ENCODE measurements at regions of chr2 and their contacts with region 1.

Region 1: DNA sequence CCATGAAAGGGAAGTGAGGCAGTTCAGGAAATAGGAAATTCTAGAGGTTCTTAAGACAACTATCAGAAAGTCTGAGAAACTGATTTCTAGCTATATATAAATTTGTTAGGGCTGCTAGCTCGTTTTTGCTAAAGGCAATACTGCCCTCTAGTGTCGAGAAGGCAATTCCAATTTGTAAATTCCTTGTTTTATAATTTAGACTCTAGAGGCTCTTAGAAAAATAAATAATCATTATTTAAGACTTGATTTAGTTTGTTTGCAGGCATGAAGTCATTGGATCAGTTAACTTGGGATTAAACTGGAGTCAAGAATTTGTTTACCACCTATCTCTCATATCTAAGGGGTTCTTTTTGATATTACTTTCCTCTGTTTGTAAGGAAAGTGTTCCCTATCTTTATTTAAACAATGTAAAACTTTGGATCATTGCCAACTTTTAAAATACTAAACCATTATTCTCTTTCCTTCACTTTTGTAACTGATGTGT is 66.2 kb downstream of the ACVR2A start:
- DNase-seq: peak; percentile 54
- ATAC-seq: peak; percentile 55
- H3K4me3 ChIP-seq: no peak overlapping the region
- H3K27ac ChIP-seq: no peak overlapping the region
- H3K4me1 ChIP-seq: no peaks in the 10 kb centered on the region
- H3K27me3 ChIP-seq: no peaks in the 10 kb centered on the region
- CTCF ChIP-seq: peak; percentile 73
- EP300 ChIP-seq: no peak
- POLR2A ChIP-seq: no peak
- RAD21 ChIP-seq: peak; percentile 74

Region 2: DNA sequence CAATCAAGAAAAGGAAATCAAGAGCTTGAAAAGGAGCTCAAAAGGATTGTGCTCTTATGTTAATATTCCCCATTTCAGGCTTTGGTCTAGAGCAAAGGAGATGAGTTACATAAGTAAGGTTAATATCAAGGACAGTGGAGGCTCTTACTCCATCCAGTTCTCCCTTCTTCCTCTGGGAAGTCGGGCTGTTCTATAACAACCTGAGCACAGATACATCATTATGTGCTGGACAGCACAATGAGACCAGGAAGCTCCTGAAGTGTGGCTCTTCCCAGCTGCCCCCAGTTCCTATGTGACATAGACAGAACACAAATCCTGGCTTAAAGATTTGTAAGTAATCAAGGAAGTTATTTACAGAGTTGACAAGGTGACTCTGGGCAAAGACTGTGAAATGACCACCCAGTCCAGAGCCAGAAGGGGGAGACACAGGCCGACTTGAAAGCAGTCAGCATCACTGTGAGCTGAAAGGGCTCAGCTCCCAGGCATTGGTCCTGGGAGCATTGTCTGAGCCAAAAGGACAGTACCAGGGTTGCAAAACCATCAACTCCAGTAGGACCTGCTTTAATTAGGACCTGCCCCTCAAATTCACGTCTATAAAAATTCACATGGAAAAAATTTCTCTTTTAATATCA is 983.8 kb before region 1 on chr2:
- CTCF ChIA-PET with region 1: no interaction called
- POLR2A ChIA-PET with region 1: no interaction called
- in situ Hi-C with region 1: no loop called
- intact Hi-C with region 1: loop called (anchors 1 kb)
- DNase-seq: peak; percentile 28
- ATAC-seq: peak; percentile 95
- H3K4me3 ChIP-seq: no peak overlapping the region
- H3K27ac ChIP-seq: no peak overlapping the region
- H3K4me1 ChIP-seq: no peaks in the 10 kb centered on the region
- H3K27me3 ChIP-seq: no peaks in the 10 kb centered on the region
- CTCF ChIP-seq: peak; percentile 67
- EP300 ChIP-seq: no peak
- POLR2A ChIP-seq: no peak
- RAD21 ChIP-seq: no peak

Region 3: GRCh38 chr2:147082850-147083522 is 828.0 kb before region 1 on chr2:
- CTCF ChIA-PET with region 1: interaction called, 15 read pairs
- POLR2A ChIA-PET with region 1: interaction called, 3 read pairs
- in situ Hi-C with region 1: loop called (anchors 10 kb)
- intact Hi-C with region 1: loop called (anchors 1 kb)
- DNase-seq: peak; percentile 78
- ATAC-seq: peak; percentile 95
- H3K4me3 ChIP-seq: no peak overlapping the region
- H3K27ac ChIP-seq: no peak overlapping the region
- H3K4me1 ChIP-seq: no peaks in the 10 kb centered on the region
- H3K27me3 ChIP-seq: no peaks in the 10 kb centered on the region
- CTCF ChIP-seq: peak; percentile 83
- EP300 ChIP-seq: no peak
- POLR2A ChIP-seq: no peak
- RAD21 ChIP-seq: no peak

Region 4: DNA sequence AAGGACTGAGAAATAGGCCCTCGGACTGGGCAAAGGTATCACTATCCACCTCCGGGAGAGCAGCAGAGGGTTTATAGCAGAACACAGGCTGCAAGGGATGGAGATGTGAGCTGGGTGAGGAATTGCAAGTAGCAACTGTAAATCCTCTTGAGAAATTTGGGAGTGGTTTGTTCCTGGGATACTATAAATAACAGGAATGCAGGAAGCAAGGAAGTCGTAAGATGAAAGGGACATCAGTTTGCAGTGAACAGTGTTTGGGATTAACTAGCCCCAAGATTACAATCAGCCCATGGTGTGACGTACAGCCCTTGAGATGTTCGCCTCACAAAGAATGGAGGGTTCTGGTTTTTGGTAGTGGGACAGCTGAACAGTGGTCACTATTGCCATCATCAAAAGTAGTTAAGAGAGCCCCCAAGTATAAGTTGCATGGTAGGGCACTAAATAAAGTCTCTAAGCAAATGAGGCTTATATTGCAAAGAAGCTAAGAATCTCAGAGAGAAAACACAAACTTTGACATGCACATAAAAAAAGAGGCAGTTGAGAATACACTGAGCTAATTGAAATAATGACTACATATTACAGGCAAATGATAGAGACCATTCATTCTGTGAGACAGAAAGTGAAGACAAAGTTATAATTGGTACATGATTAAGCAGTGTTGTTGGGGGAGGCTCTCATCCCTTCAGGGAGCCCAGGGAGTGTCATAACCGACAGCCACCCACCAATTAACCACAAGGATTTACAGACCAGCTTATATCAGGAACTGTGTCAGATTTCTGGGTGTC is 428.7 kb before region 1 on chr2:
- CTCF ChIA-PET with region 1: no interaction called
- POLR2A ChIA-PET with region 1: no interaction called
- in situ Hi-C with region 1: no loop called
- intact Hi-C with region 1: loop called (anchors 10 kb)
- DNase-seq: no peak
- ATAC-seq: no peak
- H3K4me3 ChIP-seq: no peak overlapping the region
- H3K27ac ChIP-seq: no peak overlapping the region
- H3K4me1 ChIP-seq: no peaks in the 10 kb centered on the region
- H3K27me3 ChIP-seq: no peaks in the 10 kb centered on the region
- CTCF ChIP-seq: no peak
- EP300 ChIP-seq: no peak
- POLR2A ChIP-seq: no peak
- RAD21 ChIP-seq: no peak

Region 5: DNA sequence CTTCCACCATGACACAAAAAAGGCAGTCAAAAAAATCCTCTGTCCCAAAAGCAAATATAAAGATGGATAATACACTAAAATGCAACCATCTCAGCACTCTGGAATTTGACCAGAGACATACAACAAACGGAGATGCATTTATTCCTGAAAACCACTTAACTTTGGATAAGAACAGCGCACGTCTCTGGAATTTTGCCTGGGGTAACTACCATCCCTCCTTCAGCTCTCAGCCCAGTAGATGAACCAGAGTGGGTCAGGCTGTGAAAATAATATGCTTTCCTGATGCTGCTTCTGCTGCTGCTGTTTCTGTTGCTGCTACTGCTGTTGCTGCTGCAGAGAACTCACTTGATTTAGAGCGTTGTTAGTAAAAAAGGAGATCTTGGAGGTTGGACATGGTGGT is 200.0 kb before region 1 on chr2:
- CTCF ChIA-PET with region 1: no interaction called
- POLR2A ChIA-PET with region 1: no interaction called
- in situ Hi-C with region 1: no loop called
- intact Hi-C with region 1: loop called (anchors 5 kb)
- DNase-seq: no peak
- ATAC-seq: no peak
- H3K4me3 ChIP-seq: no peak overlapping the region
- H3K27ac ChIP-seq: no peak overlapping the region
- H3K4me1 ChIP-seq: no peaks in the 10 kb centered on the region
- H3K27me3 ChIP-seq: peaks cover 0 to 2% of the 10 kb centered on the region in 2 experiments; a peak in 1 of 5 replicates
- CTCF ChIP-seq: no peak
- EP300 ChIP-seq: no peak
- POLR2A ChIP-seq: no peak
- RAD21 ChIP-seq: no peak

Region 6: DNA sequence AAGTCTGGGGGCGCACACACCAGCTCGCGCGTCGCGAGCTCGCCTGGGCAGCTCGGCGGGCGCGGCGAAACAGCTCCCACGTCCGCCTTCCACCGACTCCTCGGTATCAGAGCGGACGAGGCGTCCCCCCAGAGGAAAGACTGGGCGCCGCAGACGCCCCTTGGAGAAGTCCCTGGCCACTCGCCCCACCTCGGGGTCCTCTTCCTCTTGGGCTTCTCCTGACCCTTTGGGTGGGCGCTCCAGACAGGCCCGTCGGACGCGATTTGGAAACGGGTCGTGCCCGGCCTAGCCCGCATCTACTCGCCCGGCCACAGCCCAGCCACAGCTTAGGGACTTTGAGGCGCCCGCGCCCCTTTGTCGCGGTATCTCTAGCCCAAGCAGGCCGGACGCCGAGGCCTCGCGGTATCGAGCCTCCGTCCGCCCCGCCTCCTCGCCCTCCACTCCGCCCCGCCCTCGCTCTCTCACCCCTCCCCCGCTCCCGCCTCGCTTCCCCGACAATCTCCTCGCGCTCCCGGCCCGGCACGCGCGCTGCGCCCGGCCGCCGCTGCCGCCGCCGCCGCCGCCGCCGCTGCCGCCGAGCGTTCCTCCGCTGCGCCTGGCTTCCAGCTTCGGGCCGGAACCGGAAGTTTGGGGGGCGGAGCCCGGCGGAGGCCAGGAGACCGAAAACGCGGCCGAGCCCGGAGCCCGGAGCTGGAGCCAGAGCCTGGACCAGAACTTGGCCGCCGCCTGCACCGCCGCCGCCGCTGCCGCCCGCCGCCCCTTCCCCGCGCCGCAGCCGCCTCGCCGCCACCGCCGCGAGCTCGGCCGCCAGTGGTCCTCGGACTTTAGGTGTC is 67.0 kb before region 1 on chr2:
- CTCF ChIA-PET with region 1: no interaction called
- POLR2A ChIA-PET with region 1: no interaction called
- in situ Hi-C with region 1: no loop called
- intact Hi-C with region 1: loop called (anchors 1 kb)
- DNase-seq: peak; percentile 82
- ATAC-seq: peak; percentile 95
- H3K4me3 ChIP-seq: peak overlapping the region; percentile 88 to 97 (median 94)
- H3K27ac ChIP-seq: peak overlapping the region; percentile 95
- H3K4me1 ChIP-seq: peaks cover 33% of the 10 kb centered on the region
- H3K27me3 ChIP-seq: peaks cover 0 to 5% of the 10 kb centered on the region in 2 experiments; a peak in 2 of 5 replicates
- CTCF ChIP-seq: peak; percentile 56
- EP300 ChIP-seq: peak in 1 of 2 experiments; percentile 4; a peak in 1 of 4 replicates
- POLR2A ChIP-seq: peak; percentile 65 to 86; a peak in 3 of 4 replicates
- RAD21 ChIP-seq: peak; percentile 75